CD8-positive, alpha-beta T cell (primary cell): ENCODE measurements at regions of chr3 and their contacts with region 1.

Region 1: DNA sequence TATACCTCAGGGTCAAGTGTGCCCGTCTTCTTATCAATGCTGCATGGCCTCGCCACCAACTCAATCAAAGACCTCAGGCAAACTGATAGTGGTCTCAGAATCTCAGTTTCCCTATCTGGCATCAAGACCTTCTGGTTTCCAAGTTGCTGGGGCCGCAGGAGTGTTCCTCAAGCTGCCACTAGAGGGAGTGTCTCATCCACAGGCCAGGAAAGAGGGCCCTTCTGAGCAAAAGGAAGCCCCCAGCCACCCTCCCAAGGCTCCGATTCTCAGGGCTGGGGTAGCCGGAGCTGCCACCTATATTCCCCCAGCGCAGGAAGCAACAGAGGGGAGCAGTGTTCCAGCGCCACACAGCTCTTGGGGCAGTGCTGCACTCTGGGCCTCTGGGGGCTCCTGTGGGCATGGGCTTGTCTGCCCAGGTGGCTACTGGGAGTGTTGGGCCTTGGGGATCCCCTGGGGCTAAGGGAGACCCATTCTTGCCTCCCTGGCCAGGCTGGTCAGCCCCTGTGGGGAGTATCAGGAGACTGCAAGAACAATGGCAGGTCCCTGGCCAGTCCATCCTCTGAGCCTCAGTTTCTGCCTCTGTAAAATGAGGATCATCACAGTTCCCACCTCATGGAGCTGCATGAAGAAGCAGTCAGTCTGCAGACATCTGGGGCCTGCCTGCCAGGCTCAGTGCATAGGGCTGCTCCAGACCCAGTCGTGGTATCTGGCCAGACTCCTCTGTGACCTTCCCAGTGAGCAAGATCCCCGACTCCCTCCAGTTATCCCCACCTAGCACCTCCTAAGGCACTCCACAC is 23.4 kb upstream of the SEC13 start:
- DNase-seq: peak; percentile 29 to 71 (median 60)
- ATAC-seq: peak; percentile 52
- H3K4me3 ChIP-seq: no peak overlapping the region
- H3K4me3 Mint-ChIP-seq: no peak overlapping the region
- H3K27ac ChIP-seq: no peak overlapping the region
- H3K27ac Mint-ChIP-seq: no peak overlapping the region
- H3K4me1 ChIP-seq: no peaks in the 10 kb centered on the region
- H3K4me1 Mint-ChIP-seq: no peaks in the 10 kb centered on the region
- H3K27me3 ChIP-seq: no peaks in the 10 kb centered on the region
- H3K27me3 Mint-ChIP-seq: peaks cover 6% of the 10 kb centered on the region
- CTCF ChIP-seq: peak; percentile 80

Region 2: GRCh38 chr3:10522646-10523303 is 178.4 kb after region 1 on chr3:
- CTCF ChIA-PET with region 1: interaction called, 7 read pairs
- POLR2A ChIA-PET with region 1: no interaction called
- intact Hi-C with region 1: loop called in 1 of 2 experiments (anchors 2 kb)
- DNase-seq: peak in 3 of 9 experiments; percentile 12 to 47 (median 23)
- ATAC-seq: no peak
- H3K4me3 ChIP-seq: no peak overlapping the region
- H3K4me3 Mint-ChIP-seq: no peak overlapping the region
- H3K27ac ChIP-seq: no peak overlapping the region
- H3K27ac Mint-ChIP-seq: no peak overlapping the region
- H3K4me1 ChIP-seq: no peaks in the 10 kb centered on the region
- H3K4me1 Mint-ChIP-seq: no peaks in the 10 kb centered on the region
- H3K27me3 ChIP-seq: no peaks in the 10 kb centered on the region
- H3K27me3 Mint-ChIP-seq: peaks cover 31% of the 10 kb centered on the region
- CTCF ChIP-seq: no peak

Region 3: DNA sequence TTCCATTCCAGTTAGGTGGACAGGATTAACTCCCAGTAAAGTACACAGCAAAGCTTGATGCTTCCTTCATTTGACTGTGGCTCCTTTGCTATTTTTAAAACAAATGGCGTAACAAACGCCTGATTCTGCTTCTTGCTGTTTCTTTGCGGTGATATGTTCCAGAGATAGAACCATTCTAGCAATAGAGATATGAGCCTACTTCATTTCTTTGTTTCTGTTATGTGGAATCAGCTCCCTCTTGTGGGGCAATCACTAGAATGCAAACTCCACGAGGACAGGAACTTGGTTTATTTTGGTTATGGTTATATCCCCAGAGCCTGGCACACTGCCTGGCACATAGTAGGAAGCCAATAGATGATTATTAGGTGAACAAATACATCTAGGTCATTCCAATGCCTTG is 349.1 kb after region 1 on chr3:
- CTCF ChIA-PET with region 1: no interaction called
- POLR2A ChIA-PET with region 1: no interaction called
- intact Hi-C with region 1: loop called in 1 of 2 experiments (anchors 5 kb)
- DNase-seq: no peak
- ATAC-seq: no peak
- H3K4me3 ChIP-seq: no peak overlapping the region
- H3K4me3 Mint-ChIP-seq: no peak overlapping the region
- H3K27ac ChIP-seq: no peak overlapping the region
- H3K27ac Mint-ChIP-seq: no peak overlapping the region
- H3K4me1 ChIP-seq: no peaks in the 10 kb centered on the region
- H3K4me1 Mint-ChIP-seq: no peaks in the 10 kb centered on the region
- H3K27me3 ChIP-seq: no peaks in the 10 kb centered on the region
- H3K27me3 Mint-ChIP-seq: peaks cover 8% of the 10 kb centered on the region
- CTCF ChIP-seq: no peak

Region 4: DNA sequence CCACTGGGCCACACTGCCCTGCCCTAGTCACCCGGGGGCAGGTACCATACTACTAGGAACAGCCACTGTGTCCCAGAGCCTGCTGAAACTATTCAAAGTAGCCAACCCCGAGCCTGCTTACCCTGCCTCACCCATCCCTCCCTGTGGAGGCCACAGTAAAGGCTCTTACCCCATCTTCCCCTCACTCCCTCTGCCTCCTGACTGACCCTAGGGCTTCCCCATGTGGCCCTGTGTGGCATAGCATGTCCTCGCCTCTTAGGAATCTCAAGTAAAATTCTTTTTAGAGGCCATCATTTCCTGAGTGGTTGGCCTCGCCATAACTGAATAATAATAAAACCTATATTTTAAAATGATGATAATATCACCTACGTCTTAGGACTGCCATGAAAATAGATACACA is 359.5 kb after region 1 on chr3:
- CTCF ChIA-PET with region 1: no interaction called
- POLR2A ChIA-PET with region 1: no interaction called
- intact Hi-C with region 1: loop called in 1 of 2 experiments (anchors 1 kb)
- DNase-seq: no peak
- ATAC-seq: no peak
- H3K4me3 ChIP-seq: no peak overlapping the region
- H3K4me3 Mint-ChIP-seq: no peak overlapping the region
- H3K27ac ChIP-seq: no peak overlapping the region
- H3K27ac Mint-ChIP-seq: no peak overlapping the region
- H3K4me1 ChIP-seq: no peaks in the 10 kb centered on the region
- H3K4me1 Mint-ChIP-seq: peaks cover 13% of the 10 kb centered on the region
- H3K27me3 ChIP-seq: peaks cover 2 to 23% of the 10 kb centered on the region in 2 experiments
- H3K27me3 Mint-ChIP-seq: peaks cover 72% of the 10 kb centered on the region
- CTCF ChIP-seq: no peak

Region 5: DNA sequence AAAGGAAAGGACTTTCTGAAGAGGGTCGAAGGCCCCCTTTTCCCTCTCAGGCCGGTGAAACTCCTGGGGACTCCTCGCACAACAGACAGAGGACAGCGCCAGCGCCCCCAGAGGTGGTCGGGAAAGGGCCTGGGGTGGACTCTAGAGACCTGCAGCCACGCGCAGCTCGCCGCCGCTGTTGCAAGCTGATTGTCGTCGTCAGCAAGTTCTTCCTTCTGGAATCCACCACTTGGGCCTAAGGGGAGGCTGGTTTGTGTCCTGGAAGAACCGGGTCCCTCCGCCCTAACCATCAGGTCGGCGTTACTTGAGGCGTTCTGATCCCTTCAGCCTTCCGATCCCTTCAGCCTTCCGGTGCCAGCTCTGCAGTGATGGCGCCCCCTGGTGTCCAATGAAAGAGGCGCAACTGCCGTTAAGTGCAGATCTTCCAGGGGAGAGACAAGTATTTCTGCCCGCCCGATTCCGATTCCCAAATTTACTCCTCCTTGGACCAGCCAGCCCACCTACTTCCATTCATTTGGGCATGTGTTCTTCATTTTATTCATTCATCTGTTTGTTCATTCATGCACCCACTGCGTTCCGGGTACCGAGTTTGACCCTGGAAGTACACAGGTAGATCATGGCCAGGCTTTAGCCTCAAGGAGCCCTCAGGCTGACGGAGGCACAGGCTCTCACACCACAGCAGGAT is 394.5 kb after region 1 on chr3:
- CTCF ChIA-PET with region 1: interaction called, 139 read pairs
- POLR2A ChIA-PET with region 1: interaction called, 4 read pairs
- intact Hi-C with region 1: loop called in 1 of 2 experiments (anchors 1 kb)
- DNase-seq: peak; percentile 49 to 84 (median 73)
- ATAC-seq: peak; percentile 72
- H3K4me3 ChIP-seq: peak overlapping the region; percentile 10 to 44
- H3K4me3 Mint-ChIP-seq: peak overlapping the region; percentile 65
- H3K27ac ChIP-seq: no peak overlapping the region
- H3K27ac Mint-ChIP-seq: no peak overlapping the region
- H3K4me1 ChIP-seq: peaks cover 8% of the 10 kb centered on the region
- H3K4me1 Mint-ChIP-seq: peaks cover 7% of the 10 kb centered on the region
- H3K27me3 ChIP-seq: peaks cover 0 to 6% of the 10 kb centered on the region in 2 experiments
- H3K27me3 Mint-ChIP-seq: peaks cover 56% of the 10 kb centered on the region
- CTCF ChIP-seq: peak; percentile 79